ENCODE measurements at regions of chr12 and their contacts with region 1.

Region 1: GRCh38 chr12:124388679-124389536 is 94.0 kb downstream of the RFLNA start:
- DNase-seq: peak; percentile 79
- H3K4me3 ChIP-seq: peak overlapping the region; percentile 31
- H3K27ac ChIP-seq: peak overlapping the region; percentile 61
- H3K4me1 ChIP-seq: peaks cover 32% of the 10 kb centered on the region
- H3K27me3 ChIP-seq: no peaks in the 10 kb centered on the region
- CTCF ChIP-seq: no peak

Region 2: GRCh38 chr12:124347716-124348357 is 41.1 kb before region 1 on chr12:
- CTCF ChIA-PET with region 1: no interaction called
- POLR2A ChIA-PET with region 1: no interaction called
- intact Hi-C with region 1: no loop called
- DNase-seq: no peak
- H3K4me3 ChIP-seq: no peak overlapping the region
- H3K27ac ChIP-seq: no peak overlapping the region
- H3K4me1 ChIP-seq: no peaks in the 10 kb centered on the region
- H3K27me3 ChIP-seq: no peaks in the 10 kb centered on the region
- CTCF ChIP-seq: peak; percentile 56

Region 3: DNA sequence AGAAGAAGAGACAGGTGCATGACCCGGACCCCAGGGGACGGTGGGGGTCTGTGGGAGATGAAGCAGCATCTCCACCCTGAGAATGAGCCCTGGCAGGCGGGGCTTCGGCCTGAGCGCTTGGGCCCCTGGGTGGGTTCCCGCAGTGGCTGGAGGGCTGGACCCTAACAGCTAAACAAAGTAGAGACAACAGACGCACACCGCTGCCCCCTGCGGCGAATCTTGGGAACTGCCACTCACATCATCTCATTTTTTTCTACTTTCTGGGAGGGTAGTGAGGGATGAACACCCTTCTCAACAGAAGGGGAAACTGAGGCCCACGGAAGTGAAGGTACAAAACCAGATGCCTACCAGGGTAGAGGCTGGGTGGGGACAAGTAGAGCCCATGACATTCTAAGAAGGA is 10.7 kb after region 1 on chr12:
- CTCF ChIA-PET with region 1: interaction called, 12 read pairs
- POLR2A ChIA-PET with region 1: no interaction called
- intact Hi-C with region 1: no loop called
- DNase-seq: no peak
- H3K4me3 ChIP-seq: no peak overlapping the region
- H3K27ac ChIP-seq: no peak overlapping the region
- H3K4me1 ChIP-seq: peaks cover 33% of the 10 kb centered on the region
- H3K27me3 ChIP-seq: no peaks in the 10 kb centered on the region
- CTCF ChIP-seq: peak; percentile 68